Right lobe of liver (tissue), 6 donors: ENCODE measurements at regions of chr14 and their contacts with region 1.

Region 1: DNA sequence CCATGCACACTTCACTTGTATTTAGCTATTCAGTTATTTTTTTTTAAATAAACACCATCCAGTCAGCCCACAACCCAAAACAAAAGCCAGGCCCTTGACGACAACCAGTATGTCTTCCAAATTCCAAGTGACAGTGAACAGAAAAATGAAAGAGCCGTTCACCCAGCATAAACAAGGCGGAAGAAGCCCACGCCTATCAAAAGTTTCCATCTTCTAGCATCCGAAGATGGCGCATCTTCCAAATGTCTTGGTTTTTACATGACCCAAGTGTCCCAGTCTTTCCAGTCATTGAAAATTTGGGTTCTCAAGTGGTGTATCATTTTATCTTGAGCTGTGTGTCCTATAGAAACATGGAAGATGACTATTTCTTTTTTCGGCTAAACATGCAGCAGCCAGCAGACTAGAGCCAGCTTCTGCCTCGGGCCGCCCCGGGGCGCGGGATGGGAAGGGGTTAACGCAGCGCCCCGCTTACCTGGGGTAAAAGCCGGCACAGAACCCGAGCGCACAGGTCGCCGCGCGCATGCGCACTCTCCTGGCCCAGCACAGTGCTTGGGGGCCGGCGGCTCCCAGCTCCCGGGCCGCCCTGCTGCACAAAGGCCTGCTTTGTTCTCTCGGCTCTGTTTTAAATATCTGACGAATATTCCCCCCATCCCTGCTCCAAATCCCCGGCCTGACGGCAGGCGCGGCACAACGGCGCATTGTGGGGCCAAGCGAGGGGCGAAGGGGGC is 164.8 kb downstream of the ZFP36L1 start:
- DNase-seq: peak; percentile 73 to 86 (median 86)
- ATAC-seq: peak; percentile 31 to 65 (median 60)
- H3K4me3 ChIP-seq: peak overlapping the region; percentile 8 to 49 (median 32)
- H3K27ac ChIP-seq: peak overlapping the region; percentile 77 to 97 (median 92)
- H3K4me1 ChIP-seq: peaks cover 0 to 53% (median 25%) of the 10 kb centered on the region in 4 donors
- H3K27me3 ChIP-seq: no peaks in the 10 kb centered on the region
- CTCF ChIP-seq: no peak
- POLR2A ChIP-seq: peak; percentile 39

Region 2: GRCh38 chr14:68564826-68565760 is 63.0 kb before region 1 on chr14:
- intact Hi-C with region 1: loop called in 1 of 2 experiments (anchors 5 kb)
- DNase-seq: no peak
- ATAC-seq: no peak
- H3K4me3 ChIP-seq: no peak overlapping the region
- H3K27ac ChIP-seq: peak overlapping the region; percentile 71 to 91 (median 82)
- H3K4me1 ChIP-seq: peaks cover 2 to 85% (median 35%) of the 10 kb centered on the region in 4 donors
- H3K27me3 ChIP-seq: no peaks in the 10 kb centered on the region
- CTCF ChIP-seq: no peak
- POLR2A ChIP-seq: no peak

Region 3: DNA sequence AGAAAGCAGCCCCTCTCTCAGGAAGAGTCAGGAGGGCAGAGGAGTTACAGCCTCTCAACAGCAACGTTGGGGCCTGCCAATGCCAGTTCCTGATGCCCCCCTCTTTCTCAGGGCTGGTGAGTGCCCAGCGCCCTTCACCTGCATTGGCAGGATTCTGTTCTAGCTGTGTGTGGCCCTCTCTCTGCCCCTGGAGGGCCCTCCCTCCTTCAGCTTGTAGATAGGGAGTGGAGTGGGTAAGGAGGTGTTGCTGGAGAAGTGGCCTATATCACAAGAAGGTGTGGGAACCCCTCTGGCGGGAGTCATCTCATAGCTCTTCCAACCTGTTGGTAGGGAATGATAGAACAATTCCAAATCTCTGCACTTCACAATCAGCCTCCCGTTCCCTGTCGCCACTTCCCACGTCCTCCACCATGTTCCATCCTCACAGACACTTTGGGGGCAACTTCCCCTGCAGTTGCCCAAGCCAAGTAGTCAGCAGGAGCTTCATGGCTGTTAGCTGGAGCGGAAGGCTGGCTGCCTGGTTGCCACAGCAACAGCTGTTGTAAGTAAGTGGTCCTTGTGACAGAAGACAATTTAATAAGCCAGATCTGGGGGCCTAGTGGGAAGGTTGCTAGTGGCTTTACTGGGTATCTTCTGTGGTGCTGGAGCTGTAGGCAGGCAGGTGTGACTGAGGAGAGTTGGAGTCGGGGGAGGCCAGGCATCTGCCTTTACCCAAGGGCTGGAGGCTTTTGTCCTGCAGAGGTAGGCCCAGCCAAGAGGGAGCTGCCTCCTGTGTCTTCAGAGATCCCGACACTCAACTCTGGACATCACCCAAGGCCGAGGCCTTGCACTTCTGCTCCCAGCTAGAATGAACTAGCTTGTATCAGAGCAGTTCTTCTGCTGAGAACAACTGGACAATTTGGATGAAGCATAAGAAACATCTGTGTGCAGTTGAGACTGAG is 670.4 kb after region 1 on chr14:
- intact Hi-C with region 1: no loop called
- DNase-seq: no peak
- ATAC-seq: peak in 1 of 4 donors; percentile 19
- H3K4me3 ChIP-seq: no peak overlapping the region
- H3K27ac ChIP-seq: no peak overlapping the region
- H3K4me1 ChIP-seq: no peaks in the 10 kb centered on the region
- H3K27me3 ChIP-seq: no peaks in the 10 kb centered on the region
- CTCF ChIP-seq: no peak
- POLR2A ChIP-seq: no peak